CD8-positive, alpha-beta memory T cell (primary cell): ENCODE measurements at regions of chr1 and their contacts with region 1.

Region 1: DNA sequence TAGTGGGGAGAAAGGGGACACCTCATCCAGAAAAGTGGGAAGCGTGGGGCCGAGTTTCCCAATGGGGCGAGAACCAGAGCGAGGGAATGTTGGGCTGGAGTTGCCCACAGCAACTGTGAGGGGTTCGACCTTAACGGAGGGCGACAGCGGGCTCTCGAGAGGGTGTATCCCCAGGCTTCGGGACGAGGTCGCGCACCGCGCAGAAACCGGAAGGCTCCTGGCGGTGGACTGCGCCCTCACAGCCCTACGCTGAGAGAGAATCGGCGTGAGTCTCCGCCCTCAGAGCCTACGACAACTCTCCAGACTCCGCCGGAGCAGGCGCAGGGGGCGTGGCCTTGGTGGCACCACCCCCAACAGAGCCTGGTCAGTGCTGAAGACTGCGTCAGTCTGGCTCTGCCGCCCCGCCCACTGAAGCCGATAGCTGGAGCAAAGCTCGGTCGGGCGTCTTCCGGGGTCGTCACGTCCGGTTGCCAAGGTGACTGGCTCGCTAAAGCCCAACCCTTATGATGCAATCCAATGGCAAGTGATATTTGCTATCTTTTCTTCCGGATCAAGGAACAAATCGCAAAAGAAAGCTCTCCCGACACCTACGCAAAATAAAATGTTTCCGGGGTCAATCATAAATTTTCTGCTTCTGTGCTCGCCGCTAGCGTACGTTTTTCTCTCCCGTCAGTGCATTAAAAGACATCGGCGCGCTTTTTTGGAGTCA is at the start of gene LRIF1:
- DNase-seq: peak; percentile 100
- H3K4me3 ChIP-seq: peak within 1 kb of the TSS; percentile 80
- H3K4me3 Mint-ChIP-seq: peak within 1 kb of the TSS; percentile 81 to 97 (median 89)
- H3K27ac ChIP-seq: peak within 1 kb of the TSS; percentile 99
- H3K27ac Mint-ChIP-seq: peak within 1 kb of the TSS; percentile 94 to 99 (median 98)
- H3K4me1 ChIP-seq: peaks cover 23% of the 10 kb centered on the region
- H3K4me1 Mint-ChIP-seq: peaks cover 41 to 50% (median 43%) of the 10 kb centered on the region in 3 donors
- H3K27me3 ChIP-seq: peaks cover 4% of the 10 kb centered on the region
- H3K27me3 Mint-ChIP-seq: peaks cover 13 to 14% of the 10 kb centered on the region in 2 donors
- total RNA-seq, gene LRIF1: 14.1 to 15.6 TPM

Region 2: DNA sequence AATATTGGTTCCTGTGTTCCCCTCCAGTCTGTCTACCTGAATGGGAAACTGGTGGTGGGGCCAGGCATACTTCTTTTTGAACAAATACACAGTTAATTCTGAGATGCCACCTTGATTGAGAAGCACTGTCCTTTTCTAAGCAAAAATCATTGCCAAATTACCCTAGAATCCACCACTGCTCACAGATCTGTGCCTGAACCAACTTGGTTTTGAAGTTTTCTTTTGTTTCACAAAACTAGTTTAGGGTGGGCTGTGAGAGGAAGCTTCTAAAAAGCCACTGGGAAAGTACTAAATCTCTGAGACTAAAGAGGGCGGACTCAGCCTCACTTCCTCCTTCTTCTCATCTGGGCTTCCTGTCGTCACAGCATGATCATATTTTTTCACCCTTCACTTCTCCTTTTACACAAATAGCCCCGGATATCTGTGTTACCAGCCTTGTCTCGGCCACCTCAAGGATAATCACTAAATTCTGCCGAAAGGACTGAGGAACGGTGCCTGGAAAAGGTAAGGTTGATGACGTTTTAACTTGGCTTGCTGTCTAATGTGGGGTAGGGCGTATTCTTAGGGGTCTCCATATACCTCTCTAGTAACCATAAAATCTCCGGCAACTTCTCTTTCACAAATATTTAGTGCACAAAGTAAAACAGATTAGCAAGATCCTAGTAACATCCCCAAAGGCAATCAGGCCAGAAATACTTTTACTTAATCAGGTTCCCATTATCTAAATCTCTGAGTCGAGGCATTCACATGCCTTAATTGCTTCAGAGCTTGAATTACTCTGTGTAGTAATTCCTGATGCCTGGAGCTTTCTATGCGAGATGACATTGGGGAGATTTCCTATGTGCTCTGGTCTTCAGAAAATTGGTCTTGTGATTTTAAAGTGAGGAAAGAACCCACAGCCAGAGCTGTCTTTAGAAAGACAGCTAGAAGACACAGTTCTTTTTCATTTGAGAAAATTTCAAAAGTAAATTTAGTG is 90.8 kb before region 1 on chr1 and contains the start of gene CD53:
- CTCF ChIA-PET with region 1: interaction called, 3 read pairs
- POLR2A ChIA-PET with region 1: interaction called, 13 read pairs
- DNase-seq: peak; percentile 26 to 84 (median 72)
- H3K4me3 ChIP-seq: peak within 1 kb of the TSS; percentile 94
- H3K4me3 Mint-ChIP-seq: peak within 1 kb of the TSS; percentile 97 to 99 (median 99)
- H3K27ac ChIP-seq: peak within 1 kb of the TSS; percentile 95
- H3K27ac Mint-ChIP-seq: peak within 1 kb of the TSS; percentile 94 to 99 (median 98)
- H3K4me1 ChIP-seq: peaks cover 45% of the 10 kb centered on the region
- H3K4me1 Mint-ChIP-seq: peaks cover 59 to 64% (median 60%) of the 10 kb centered on the region in 3 donors
- H3K27me3 ChIP-seq: no peaks in the 10 kb centered on the region
- H3K27me3 Mint-ChIP-seq: no peaks in the 10 kb centered on the region
- total RNA-seq, gene CD53: 190 to 194 TPM